Pancreas (tissue), 10 donors: ENCODE measurements at regions of chr7 and their contacts with region 1.

Region 1: GRCh38 chr7:149662591-149663095 is 110.7 kb downstream of the ZNF467 start:
- DNase-seq: peak; percentile 59 to 88 (median 76)
- ATAC-seq: peak; percentile 89 to 100 (median 96)
- H3K4me3 ChIP-seq: no peak overlapping the region
- H3K27ac ChIP-seq: no peak overlapping the region
- H3K4me1 ChIP-seq: no peaks in the 10 kb centered on the region
- H3K27me3 ChIP-seq: peaks cover 0 to 4% (median 0%) of the 10 kb centered on the region in 4 donors
- CTCF ChIP-seq: peak; percentile 33 to 55 (median 44)

Region 2: GRCh38 chr7:148838905-148839304 is 823.7 kb before region 1 on chr7:
- intact Hi-C with region 1: no loop called
- DNase-seq: no peak
- ATAC-seq: no peak
- H3K4me3 ChIP-seq: no peak overlapping the region
- H3K27ac ChIP-seq: no peak overlapping the region
- H3K4me1 ChIP-seq: no peaks in the 10 kb centered on the region
- H3K27me3 ChIP-seq: no peaks in the 10 kb centered on the region
- CTCF ChIP-seq: no peak

Region 3: DNA sequence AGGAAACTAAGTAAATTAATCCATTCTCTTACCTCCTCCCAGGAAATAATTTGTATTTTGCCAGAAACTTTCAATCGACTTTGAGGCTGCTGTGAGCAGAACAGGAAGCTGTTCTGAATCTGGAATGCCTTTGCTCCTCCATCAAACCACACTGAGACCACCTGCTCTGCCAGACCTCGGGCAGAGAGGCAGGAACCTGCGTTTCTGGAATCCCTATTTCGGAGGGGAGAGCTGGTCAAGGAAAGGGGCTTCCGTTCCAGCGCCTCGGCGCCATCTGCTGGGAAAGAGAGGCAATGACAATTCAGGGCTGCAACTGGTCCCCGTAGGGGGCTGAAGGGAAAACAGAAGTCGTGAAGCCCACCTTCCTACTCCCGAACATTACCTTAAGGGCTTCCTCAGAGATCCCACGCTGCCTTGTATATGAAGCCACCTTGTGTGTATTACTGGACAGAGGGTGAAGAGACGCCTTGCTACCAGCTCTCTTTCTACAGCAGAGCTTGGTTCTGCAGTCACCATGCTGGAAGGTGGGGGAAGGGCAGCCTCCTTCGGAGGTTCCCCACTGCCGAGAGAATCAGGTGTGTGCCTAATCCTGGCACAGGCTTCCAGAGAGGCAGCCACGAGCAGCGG is 79.5 kb after region 1 on chr7:
- intact Hi-C with region 1: loop called in 2 of 3 experiments (anchors 5 to 10 kb)
- DNase-seq: peak; percentile 59 to 88 (median 73)
- ATAC-seq: peak; percentile 91 to 96 (median 94)
- H3K4me3 ChIP-seq: peak overlapping the region; percentile 11 to 52 (median 22)
- H3K27ac ChIP-seq: peak overlapping the region in 2 of 4 donors; percentile 39 to 54
- H3K4me1 ChIP-seq: peaks cover 0 to 5% (median 0%) of the 10 kb centered on the region in 3 donors
- H3K27me3 ChIP-seq: no peaks in the 10 kb centered on the region
- CTCF ChIP-seq: peak; percentile 52 to 86 (median 75)